HepG2 (cell line): ENCODE measurements at regions of chr14 and their contacts with region 1.

Region 1: GRCh38 chr14:58501214-58501816 is 73.8 kb downstream of the KIAA0586 start:
- DNase-seq: peak; percentile 54
- ATAC-seq: peak; percentile 79
- H3K4me3 ChIP-seq: no peak overlapping the region
- H3K27ac ChIP-seq: no peak overlapping the region
- H3K4me1 ChIP-seq: no peaks in the 10 kb centered on the region
- H3K27me3 ChIP-seq: no peaks in the 10 kb centered on the region
- CTCF ChIP-seq: peak; percentile 79
- EP300 ChIP-seq: no peak
- POLR2A ChIP-seq: no peak
- RAD21 ChIP-seq: peak; percentile 65

Region 2: GRCh38 chr14:58395812-58396788 is 105.2 kb before region 1 on chr14 and contains the start of gene TOMM20L:
- CTCF ChIA-PET with region 1: no interaction called
- POLR2A ChIA-PET with region 1: no interaction called
- in situ Hi-C with region 1: no loop called
- intact Hi-C with region 1: no loop called
- DNase-seq: peak; percentile 72
- ATAC-seq: peak; percentile 92
- H3K4me3 ChIP-seq: peak within 1 kb of the TSS; percentile 63 to 83 (median 75)
- H3K27ac ChIP-seq: peak within 1 kb of the TSS; percentile 93
- H3K4me1 ChIP-seq: peaks cover 21% of the 10 kb centered on the region
- H3K27me3 ChIP-seq: no peaks in the 10 kb centered on the region; a peak in 1 of 5 replicates
- CTCF ChIP-seq: peak; percentile 73
- EP300 ChIP-seq: no peak
- POLR2A ChIP-seq: peak in 1 of 2 experiments; percentile 28; a peak in 3 of 4 replicates
- RAD21 ChIP-seq: peak; percentile 82
- total RNA-seq, gene TOMM20L: 0.46 TPM in 1 of 2 replicates, not detected in the other

Region 3: DNA sequence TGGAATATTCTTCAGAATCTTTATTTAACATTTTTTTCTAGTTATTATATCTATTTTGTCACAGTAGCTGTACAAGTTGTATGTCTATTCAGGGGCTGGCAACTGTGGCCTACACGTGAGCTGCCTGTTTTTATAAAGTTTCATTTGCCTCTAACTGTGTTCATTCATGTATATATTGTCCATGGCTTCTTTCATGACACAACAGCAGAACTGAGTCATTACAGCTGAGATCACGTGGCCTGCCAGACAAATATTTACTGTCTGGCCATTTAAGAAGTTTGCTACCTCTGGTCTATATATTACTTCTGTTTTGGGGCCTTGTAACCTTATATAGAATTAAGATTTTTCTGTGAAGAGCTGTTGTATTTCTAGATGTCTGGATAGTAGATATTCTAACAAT is 35.9 kb before region 1 on chr14:
- CTCF ChIA-PET with region 1: no interaction called
- POLR2A ChIA-PET with region 1: no interaction called
- in situ Hi-C with region 1: no loop called
- intact Hi-C with region 1: no loop called
- DNase-seq: peak; percentile 32
- ATAC-seq: no peak; the same call in 2 of the 3 replicates
- H3K4me3 ChIP-seq: no peak overlapping the region
- H3K27ac ChIP-seq: no peak overlapping the region
- H3K4me1 ChIP-seq: peaks cover 6% of the 10 kb centered on the region; the same call in 1 of the 2 replicates
- H3K27me3 ChIP-seq: no peaks in the 10 kb centered on the region
- CTCF ChIP-seq: no peak
- EP300 ChIP-seq: no peak
- POLR2A ChIP-seq: no peak
- RAD21 ChIP-seq: no peak

Region 4: GRCh38 chr14:58560208-58560607 is 58.9 kb after region 1 on chr14:
- CTCF ChIA-PET with region 1: no interaction called
- POLR2A ChIA-PET with region 1: no interaction called
- in situ Hi-C with region 1: no loop called
- intact Hi-C with region 1: no loop called
- DNase-seq: no peak
- ATAC-seq: peak; percentile 28; the same call in 1 of the 3 replicates
- H3K4me3 ChIP-seq: no peak overlapping the region
- H3K27ac ChIP-seq: no peak overlapping the region
- H3K4me1 ChIP-seq: peaks cover 5% of the 10 kb centered on the region; the same call in 1 of the 2 replicates
- H3K27me3 ChIP-seq: no peaks in the 10 kb centered on the region
- CTCF ChIP-seq: no peak
- EP300 ChIP-seq: no peak
- POLR2A ChIP-seq: no peak
- RAD21 ChIP-seq: no peak

Region 5: DNA sequence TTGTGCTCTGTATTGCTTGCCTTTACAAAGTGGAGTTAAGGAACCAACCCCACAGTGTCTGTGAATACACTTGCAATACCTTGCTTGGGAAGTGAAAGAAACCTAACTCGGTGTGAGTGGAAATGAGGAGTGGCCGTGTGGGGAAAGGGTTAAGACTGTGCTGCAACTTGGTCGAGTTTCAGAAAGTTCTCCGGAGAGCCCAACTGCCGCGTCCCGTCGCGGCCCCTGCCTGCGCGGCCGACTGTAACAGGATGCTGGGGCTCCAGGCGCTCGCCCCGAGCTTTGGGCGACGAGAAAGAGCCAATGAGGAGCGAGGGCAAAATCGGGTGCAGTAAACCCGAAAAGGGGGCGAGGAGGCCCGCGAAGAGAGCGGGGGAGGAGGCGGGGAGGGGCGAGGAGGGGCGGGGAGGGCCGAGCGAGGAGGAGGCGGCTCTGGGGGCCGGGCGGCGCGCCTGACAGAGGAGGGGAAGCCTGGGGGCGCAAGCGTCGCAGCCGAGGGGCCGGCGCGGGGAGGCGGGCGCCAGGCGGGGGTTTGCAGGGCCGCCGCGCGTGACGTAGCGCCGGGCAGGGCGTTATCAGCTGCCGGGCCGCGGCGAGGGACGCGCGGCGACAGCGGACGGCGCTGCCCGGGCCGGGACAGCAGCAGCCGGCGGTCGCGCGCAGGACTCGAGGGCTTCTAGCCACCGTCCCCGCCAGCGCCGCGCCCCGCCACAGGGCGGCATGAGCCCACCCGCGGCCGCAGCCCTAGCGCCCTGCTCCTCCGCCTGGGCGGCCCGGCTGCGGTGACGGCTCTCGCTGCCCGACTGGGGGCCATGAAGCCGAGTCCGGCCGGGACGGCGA is 136.3 kb after region 1 on chr14 and contains the start of gene DACT1:
- CTCF ChIA-PET with region 1: no interaction called
- POLR2A ChIA-PET with region 1: no interaction called
- in situ Hi-C with region 1: no loop called
- intact Hi-C with region 1: loop called (anchors 5 kb)
- DNase-seq: no peak
- ATAC-seq: peak; percentile 87
- H3K4me3 ChIP-seq: peak within 1 kb of the TSS; percentile 36 to 68 (median 46)
- H3K27ac ChIP-seq: no peak within 1 kb of the TSS
- H3K4me1 ChIP-seq: peaks cover 9% of the 10 kb centered on the region
- H3K27me3 ChIP-seq: peaks cover 5 to 55% of the 10 kb centered on the region in 2 experiments
- CTCF ChIP-seq: no peak
- EP300 ChIP-seq: no peak
- POLR2A ChIP-seq: no peak
- RAD21 ChIP-seq: 0 out of 2 replicates have a peak, but pooled peaks have one; percentile 18
- total RNA-seq, gene DACT1: not detected in 2 replicates

Region 6: DNA sequence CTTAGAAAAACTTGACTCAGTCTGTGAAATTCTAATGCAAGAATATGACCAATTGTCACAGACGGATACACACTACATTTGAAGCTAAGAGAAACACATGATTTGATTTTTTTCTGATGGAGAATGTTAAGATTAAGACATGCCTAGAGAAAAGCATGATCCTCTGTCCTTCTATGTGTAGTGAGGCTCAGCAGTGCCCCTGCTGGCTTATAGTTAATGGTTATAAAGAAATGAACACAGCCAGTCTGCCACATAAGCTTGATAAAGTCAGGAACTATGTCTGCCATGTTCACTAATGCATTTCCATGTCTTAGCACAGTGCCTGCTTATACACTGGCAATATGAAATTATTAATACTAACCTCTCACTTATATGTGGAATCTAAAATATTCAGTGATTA is 519.1 kb after region 1 on chr14:
- CTCF ChIA-PET with region 1: no interaction called
- POLR2A ChIA-PET with region 1: no interaction called
- in situ Hi-C with region 1: loop called (anchors 10 kb)
- intact Hi-C with region 1: loop called (anchors 1 kb)
- DNase-seq: no peak
- ATAC-seq: peak; percentile 79
- H3K4me3 ChIP-seq: no peak overlapping the region
- H3K27ac ChIP-seq: no peak overlapping the region
- H3K4me1 ChIP-seq: no peaks in the 10 kb centered on the region
- H3K27me3 ChIP-seq: no peaks in the 10 kb centered on the region
- CTCF ChIP-seq: peak; percentile 46
- EP300 ChIP-seq: no peak
- POLR2A ChIP-seq: no peak
- RAD21 ChIP-seq: no peak

Region 7: GRCh38 chr14:59028476-59029202 is 527.3 kb after region 1 on chr14:
- CTCF ChIA-PET with region 1: interaction called, 3 read pairs
- POLR2A ChIA-PET with region 1: no interaction called
- in situ Hi-C with region 1: loop called (anchors 10 kb)
- intact Hi-C with region 1: no loop called
- DNase-seq: peak; percentile 39
- ATAC-seq: peak; percentile 97
- H3K4me3 ChIP-seq: no peak overlapping the region
- H3K27ac ChIP-seq: no peak overlapping the region
- H3K4me1 ChIP-seq: no peaks in the 10 kb centered on the region
- H3K27me3 ChIP-seq: no peaks in the 10 kb centered on the region
- CTCF ChIP-seq: peak; percentile 85
- EP300 ChIP-seq: no peak
- POLR2A ChIP-seq: no peak
- RAD21 ChIP-seq: peak; percentile 66

Region 8: GRCh38 chr14:59055439-59056045 is 554.2 kb after region 1 on chr14:
- CTCF ChIA-PET with region 1: interaction called, 5 read pairs
- POLR2A ChIA-PET with region 1: no interaction called
- in situ Hi-C with region 1: loop called (anchors 10 kb)
- intact Hi-C with region 1: loop called (anchors 1 kb)
- DNase-seq: peak; percentile 21
- ATAC-seq: peak; percentile 75
- H3K4me3 ChIP-seq: no peak overlapping the region
- H3K27ac ChIP-seq: no peak overlapping the region
- H3K4me1 ChIP-seq: no peaks in the 10 kb centered on the region
- H3K27me3 ChIP-seq: no peaks in the 10 kb centered on the region
- CTCF ChIP-seq: peak; percentile 67
- EP300 ChIP-seq: no peak
- POLR2A ChIP-seq: no peak
- RAD21 ChIP-seq: no peak